Lower leg skin (tissue), 4 donors: ENCODE measurements at regions of chr18 and their contacts with region 1.

Region 1: DNA sequence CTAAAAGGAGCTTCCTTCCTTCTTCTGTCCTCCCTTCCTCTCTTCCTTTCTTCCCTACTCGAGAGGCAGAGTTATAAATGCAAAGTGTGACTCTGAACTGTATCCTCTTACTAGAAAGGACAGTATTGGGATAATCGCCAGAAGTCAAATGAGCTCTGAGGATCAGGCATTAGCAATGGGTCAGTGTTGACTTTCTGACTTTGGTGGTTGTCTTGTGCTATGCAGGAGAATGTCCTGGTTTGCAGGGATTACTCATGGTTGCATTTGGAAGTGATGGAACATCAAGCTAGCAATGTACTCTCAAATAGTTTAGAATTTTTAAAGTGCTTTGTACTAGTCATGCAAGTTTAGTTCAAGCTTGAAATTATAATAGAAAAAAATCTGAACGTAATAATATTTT is 115.6 kb downstream of the TXNL1 start:
- DNase-seq: no peak
- H3K4me3 ChIP-seq: no peak overlapping the region
- CTCF ChIP-seq: no peak
- POLR2A ChIP-seq: no peak

Region 2: DNA sequence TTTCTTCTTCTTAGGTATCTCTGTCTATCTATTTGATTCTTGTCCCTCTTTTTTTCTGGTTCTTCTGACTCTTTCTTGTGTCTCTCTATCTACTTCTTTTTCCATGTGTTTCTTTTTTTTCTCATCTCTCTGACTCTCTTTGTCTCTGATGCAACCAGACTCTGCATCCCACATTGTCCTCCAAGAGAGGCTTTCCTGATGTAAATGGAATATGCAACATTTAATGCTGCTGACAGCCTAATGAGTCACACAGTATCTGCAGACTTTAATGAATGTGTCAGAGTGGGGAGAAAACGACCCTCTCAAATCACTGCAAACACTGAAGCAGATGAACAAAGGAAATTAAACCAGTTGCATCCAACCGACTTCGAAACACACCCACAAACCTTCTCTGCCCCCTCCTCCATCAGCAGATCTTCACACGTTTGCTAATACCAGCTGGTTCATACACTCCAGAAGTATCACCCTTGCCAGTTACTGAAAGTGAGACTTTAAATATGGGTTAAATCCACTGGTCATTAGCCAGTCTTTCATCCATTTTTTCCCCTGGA is 236.0 kb before region 1 on chr18:
- intact Hi-C with region 1: no loop called
- DNase-seq: no peak
- H3K4me3 ChIP-seq: no peak overlapping the region
- CTCF ChIP-seq: no peak
- POLR2A ChIP-seq: no peak

Region 3: GRCh38 chr18:56382541-56382940 is 140.3 kb before region 1 on chr18:
- intact Hi-C with region 1: no loop called
- DNase-seq: no peak
- H3K4me3 ChIP-seq: no peak overlapping the region
- CTCF ChIP-seq: no peak
- POLR2A ChIP-seq: no peak

Region 4: DNA sequence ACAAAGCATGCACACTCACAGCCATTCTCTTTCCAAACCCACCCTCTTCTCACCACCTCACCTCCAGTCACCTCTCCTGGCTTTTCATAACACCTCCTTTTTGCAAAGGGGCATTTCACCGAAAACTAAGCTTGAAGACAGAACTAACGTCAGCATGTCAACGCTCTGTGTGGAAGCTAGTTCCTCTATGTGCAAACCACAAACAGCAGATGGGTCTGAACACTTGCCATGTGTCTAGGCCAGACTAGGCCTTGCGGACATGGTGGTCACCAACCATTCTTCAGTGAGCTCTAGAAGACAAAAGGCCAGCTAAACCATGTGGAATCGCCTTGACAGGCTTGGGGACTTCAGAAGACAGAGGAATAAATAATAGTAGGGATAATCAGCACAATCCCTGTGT is 32.9 kb before region 1 on chr18:
- intact Hi-C with region 1: loop called (anchors 2 kb)
- DNase-seq: no peak
- H3K4me3 ChIP-seq: no peak overlapping the region
- CTCF ChIP-seq: no peak
- POLR2A ChIP-seq: no peak